T-cell (primary cell): ENCODE measurements at regions of chr15 and their contacts with region 1.

Region 1: DNA sequence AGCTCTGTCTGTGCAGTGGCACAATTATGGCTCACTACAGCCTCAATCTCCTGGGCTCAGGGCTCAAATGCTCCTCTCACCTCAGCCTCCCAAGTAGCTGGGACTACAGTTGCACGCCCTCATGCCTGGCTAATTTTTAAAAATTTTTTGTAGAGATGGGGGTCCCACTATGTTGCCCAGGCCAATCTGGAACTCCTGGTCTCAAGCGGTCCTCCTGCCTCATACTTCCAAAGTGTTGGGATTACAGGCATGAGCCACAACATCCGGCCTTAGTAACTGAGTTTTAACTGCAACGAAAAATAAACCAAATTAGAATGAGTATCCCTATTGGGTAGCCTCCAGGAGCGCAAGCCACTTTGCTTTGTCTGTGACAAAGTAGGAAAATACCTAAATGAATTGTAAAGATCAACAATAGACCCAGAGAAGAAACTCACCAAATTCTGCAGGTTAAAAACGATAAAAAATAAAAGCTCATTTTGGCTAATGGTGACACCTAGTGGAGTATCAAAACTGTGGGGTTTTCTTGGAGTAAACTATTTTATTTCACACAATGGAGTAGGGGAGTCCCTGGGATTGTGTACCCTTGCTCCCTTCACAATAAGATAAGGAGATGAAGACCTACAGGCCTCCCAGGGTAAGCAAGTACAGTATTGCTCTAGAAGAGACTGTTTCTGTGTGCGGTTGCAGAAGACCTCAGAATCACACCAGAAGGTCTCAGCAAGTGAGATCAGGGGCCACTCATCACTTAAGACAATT is 21.0 kb upstream of the CA12 start:
- DNase-seq: peak in 2 of 35 experiments; percentile 5 to 61
- ATAC-seq: peak in 2 of 4 experiments; percentile 26 to 58
- H3K4me3 ChIP-seq: no peak overlapping the region
- H3K4me3 Mint-ChIP-seq: no peak overlapping the region
- H3K27ac ChIP-seq: no peak overlapping the region
- H3K27ac Mint-ChIP-seq: no peak overlapping the region
- H3K4me1 ChIP-seq: peaks cover 0 to 2% of the 10 kb centered on the region in 2 experiments
- H3K4me1 Mint-ChIP-seq: peaks cover 0 to 2% (median 0%) of the 10 kb centered on the region in 3 donors
- H3K27me3 ChIP-seq: no peaks in the 10 kb centered on the region
- H3K27me3 Mint-ChIP-seq: no peaks in the 10 kb centered on the region

Region 2: DNA sequence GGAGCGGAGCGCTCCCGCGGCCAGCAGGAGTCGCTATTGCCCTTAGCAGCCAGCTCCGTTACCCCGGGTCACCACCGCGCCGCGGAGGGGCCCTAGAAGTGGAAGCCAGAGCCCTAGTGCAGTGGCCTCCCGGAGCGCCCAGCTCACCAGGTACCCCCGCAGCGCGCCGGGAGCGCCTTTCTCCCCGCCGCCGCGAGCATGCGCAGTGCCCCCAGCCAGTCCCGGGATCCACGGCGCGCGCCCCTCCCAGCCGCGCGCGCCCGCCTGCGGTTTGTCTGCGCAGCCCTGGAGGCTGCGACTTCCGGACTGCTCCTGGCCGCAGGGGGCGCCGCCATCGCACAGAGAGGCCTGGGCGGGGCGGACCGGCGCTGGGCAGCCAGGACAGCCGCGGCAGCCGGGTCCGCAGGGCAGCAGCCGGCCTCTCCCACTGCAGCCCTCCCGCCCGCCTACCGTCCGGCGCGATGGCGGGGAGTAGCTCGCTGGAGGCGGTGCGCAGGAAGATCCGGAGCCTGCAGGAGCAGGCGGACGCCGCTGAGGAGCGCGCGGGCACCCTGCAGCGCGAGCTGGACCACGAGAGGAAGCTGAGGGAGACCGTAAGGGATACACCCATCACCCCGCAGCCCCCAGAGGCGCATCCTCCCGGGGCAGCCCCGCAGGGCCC is 354.4 kb before region 1 on chr15:
- CTCF ChIA-PET with region 1: interaction called, 5 to 15 read pairs
- POLR2A ChIA-PET with region 1: no interaction called
- DNase-seq: peak; percentile 64 to 92 (median 81)
- ATAC-seq: peak; percentile 84 to 87 (median 85)
- H3K4me3 ChIP-seq: peak overlapping the region; percentile 66 to 95
- H3K4me3 Mint-ChIP-seq: peak overlapping the region; percentile 92 to 95 (median 94)
- H3K27ac ChIP-seq: peak overlapping the region; percentile 25
- H3K27ac Mint-ChIP-seq: peak overlapping the region in 1 of 2 donors; percentile 72
- H3K4me1 ChIP-seq: peaks cover 4 to 21% of the 10 kb centered on the region in 2 experiments
- H3K4me1 Mint-ChIP-seq: peaks cover 19 to 31% (median 27%) of the 10 kb centered on the region in 3 donors
- H3K27me3 ChIP-seq: peaks cover 4 to 23% of the 10 kb centered on the region in 2 experiments
- H3K27me3 Mint-ChIP-seq: peaks cover 31 to 40% of the 10 kb centered on the region in 2 donors

Region 3: DNA sequence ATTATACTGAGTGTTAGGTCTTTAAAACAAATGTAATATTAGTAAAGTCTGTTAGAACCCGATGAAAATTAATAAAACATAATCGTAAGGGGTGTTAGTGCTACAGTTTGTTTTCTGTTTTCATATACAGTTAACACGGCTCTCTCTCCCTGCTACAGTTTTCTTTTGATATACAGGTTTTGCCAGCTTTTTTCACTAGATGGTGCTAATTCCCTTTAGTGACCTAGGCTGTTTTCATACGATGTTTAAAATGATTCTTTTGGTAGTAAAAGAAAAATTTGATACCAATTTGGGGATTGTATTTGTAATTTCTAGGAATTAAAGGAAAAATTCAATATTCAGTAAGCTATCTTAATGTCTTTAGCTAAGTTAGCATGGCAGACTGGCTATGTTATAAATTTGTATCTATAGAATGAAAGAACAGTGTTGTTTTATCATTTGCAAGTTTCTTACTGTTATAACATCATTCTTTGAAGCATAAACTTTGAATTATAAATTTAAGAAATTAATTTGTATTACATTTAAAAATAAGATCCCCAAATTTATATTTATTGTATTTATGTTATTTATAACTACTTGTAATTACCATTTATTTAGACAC is 113.8 kb before region 1 on chr15:
- CTCF ChIA-PET with region 1: interaction called, 6 to 17 read pairs
- POLR2A ChIA-PET with region 1: interaction called in 1 of 2 experiments, 3 read pairs
- DNase-seq: peak in 1 of 35 experiments; percentile 69
- ATAC-seq: peak; percentile 65 to 81 (median 76)
- H3K4me3 ChIP-seq: no peak overlapping the region
- H3K4me3 Mint-ChIP-seq: no peak overlapping the region
- H3K27ac ChIP-seq: no peak overlapping the region
- H3K27ac Mint-ChIP-seq: peak overlapping the region; percentile 35 to 58
- H3K4me1 ChIP-seq: no peaks in the 10 kb centered on the region
- H3K4me1 Mint-ChIP-seq: peaks cover 5 to 9% (median 8%) of the 10 kb centered on the region in 3 donors
- H3K27me3 ChIP-seq: no peaks in the 10 kb centered on the region
- H3K27me3 Mint-ChIP-seq: no peaks in the 10 kb centered on the region